HepG2 (cell line): ENCODE measurements at regions of chr2 and their contacts with region 1.

Region 1: DNA sequence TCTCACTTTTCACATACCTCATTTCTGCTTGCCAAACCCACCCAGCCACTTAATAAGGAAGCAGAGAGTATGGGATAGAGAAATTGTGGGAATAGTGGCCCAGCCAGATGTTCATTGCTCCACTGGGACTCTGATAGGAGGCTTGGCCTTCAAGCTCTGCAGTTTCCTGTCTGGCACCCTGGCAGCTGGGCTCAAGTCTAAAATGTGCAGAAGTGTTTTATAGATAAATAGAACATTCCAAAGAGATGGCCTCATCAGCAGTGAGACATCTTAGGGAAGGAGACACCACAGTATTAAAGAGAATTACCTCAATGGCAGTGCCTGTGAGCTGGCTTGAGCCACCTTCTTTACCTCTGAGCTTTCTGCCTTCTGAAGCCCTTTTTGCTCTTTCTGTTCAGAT is 24.7 kb downstream of the COPS7B start:
- DNase-seq: no peak
- ATAC-seq: no peak
- H3K4me3 ChIP-seq: no peak overlapping the region
- H3K27ac ChIP-seq: no peak overlapping the region
- H3K4me1 ChIP-seq: 0 out of 2 replicates have a peak, but pooled peaks cover 3% of the 10 kb centered on the region
- H3K27me3 ChIP-seq: no peaks in the 10 kb centered on the region
- CTCF ChIP-seq: no peak
- EP300 ChIP-seq: no peak
- POLR2A ChIP-seq: no peak
- RAD21 ChIP-seq: no peak

Region 2: DNA sequence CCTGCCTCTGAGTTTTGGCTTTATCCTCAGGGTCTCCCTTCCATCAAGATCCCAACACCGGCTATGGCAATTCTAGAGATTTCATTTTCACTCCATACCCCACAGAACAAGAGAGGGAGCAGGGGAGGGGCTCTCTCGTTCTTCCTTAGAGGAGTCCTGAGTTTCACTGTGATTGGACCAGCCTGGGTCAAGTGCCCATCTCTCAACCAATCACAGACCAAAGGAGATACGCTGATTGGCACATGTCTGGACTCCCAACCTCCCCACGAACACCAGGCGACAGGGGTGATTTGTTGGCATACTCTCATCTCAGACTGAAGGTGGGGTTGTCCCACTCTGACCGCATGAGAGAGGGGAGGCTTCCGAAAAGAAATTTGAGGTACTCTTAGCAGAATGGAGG is 50.6 kb after region 1 on chr2:
- CTCF ChIA-PET with region 1: no interaction called
- POLR2A ChIA-PET with region 1: no interaction called
- in situ Hi-C with region 1: loop called (anchors 10 kb)
- intact Hi-C with region 1: no loop called
- DNase-seq: no peak
- ATAC-seq: no peak
- H3K4me3 ChIP-seq: no peak overlapping the region
- H3K27ac ChIP-seq: no peak overlapping the region
- H3K4me1 ChIP-seq: no peaks in the 10 kb centered on the region
- H3K27me3 ChIP-seq: peaks cover 2 to 40% of the 10 kb centered on the region in 2 experiments; a peak in 4 of 5 replicates
- CTCF ChIP-seq: no peak
- EP300 ChIP-seq: no peak
- POLR2A ChIP-seq: no peak
- RAD21 ChIP-seq: no peak